Stomach (tissue), 19 donors: ENCODE measurements at regions of chr1 and their contacts with region 1.

Region 1: GRCh38 chr1:11339346-11340232 is 66.6 kb downstream of the UBIAD1 start:
- DNase-seq: peak in 1 of 2 donors; percentile 61
- H3K4me3 ChIP-seq: no peak overlapping the region
- H3K27ac ChIP-seq: no peak overlapping the region
- H3K4me1 ChIP-seq: peaks cover 0 to 18% (median 6%) of the 10 kb centered on the region in 4 donors
- H3K27me3 ChIP-seq: peaks cover 0 to 79% (median 10%) of the 10 kb centered on the region in 3 donors
- CTCF ChIP-seq: no peak
- EP300 ChIP-seq: no peak
- POLR2A ChIP-seq: no peak

Region 2: DNA sequence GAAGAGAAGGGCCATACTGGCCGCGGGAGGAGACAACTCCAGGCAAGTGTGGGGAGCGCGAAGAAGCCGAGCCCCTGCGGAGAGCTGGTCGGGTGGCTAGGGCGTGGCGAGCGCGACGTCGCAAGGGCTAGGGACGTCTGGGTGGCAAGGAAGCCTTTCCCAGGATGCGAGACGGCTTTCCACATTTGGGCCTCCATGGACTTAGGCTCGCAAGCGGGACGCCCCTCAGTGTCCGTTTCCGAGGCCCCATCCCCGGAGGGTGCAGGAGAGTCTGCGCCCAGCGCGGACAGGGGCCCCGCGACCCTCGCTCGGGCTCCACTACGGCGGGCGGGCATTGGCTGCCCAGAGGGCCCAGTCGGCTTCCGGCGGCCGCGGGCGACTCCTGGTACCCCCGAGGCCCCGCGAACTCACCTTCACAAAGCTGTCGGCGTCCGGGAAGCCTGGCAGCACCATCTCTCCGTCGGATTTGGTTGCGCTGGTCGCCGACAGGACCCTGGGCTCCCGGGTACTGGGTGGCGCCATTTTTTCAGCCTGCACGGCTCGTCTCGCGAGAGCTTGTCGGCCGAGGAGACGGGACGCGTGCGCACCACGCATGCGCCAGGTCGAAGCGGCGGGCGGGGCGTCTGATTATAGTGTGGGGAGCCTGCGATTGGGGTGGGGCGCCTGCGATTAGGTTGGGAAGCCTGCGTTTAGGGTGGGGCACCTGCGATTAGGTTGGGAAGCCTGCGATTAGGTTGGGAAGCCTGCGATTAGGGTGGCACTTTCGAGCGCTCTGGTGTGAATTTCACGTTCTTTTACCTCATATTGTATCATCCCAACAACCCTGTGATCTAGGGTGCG is 240.1 kb before region 1 on chr1 and contains the start of gene EXOSC10:
- intact Hi-C with region 1: no loop called
- DNase-seq: peak; percentile 96 to 98
- H3K4me3 ChIP-seq: peak within 1 kb of the TSS; percentile 88 to 99 (median 96)
- H3K27ac ChIP-seq: peak within 1 kb of the TSS; percentile 85 to 91 (median 88)
- H3K4me1 ChIP-seq: peaks cover 14 to 18% (median 18%) of the 10 kb centered on the region in 4 donors
- H3K27me3 ChIP-seq: no peaks in the 10 kb centered on the region
- CTCF ChIP-seq: no peak
- EP300 ChIP-seq: no peak
- POLR2A ChIP-seq: no peak
- total RNA-seq, gene EXOSC10: 15.1 to 118 (median 38.3) TPM

Region 3: GRCh38 chr1:11134251-11134897 is 205.2 kb before region 1 on chr1:
- intact Hi-C with region 1: no loop called
- DNase-seq: no peak
- H3K4me3 ChIP-seq: no peak overlapping the region
- H3K27ac ChIP-seq: no peak overlapping the region
- H3K4me1 ChIP-seq: no peaks in the 10 kb centered on the region
- H3K27me3 ChIP-seq: no peaks in the 10 kb centered on the region
- CTCF ChIP-seq: no peak
- EP300 ChIP-seq: no peak
- POLR2A ChIP-seq: no peak

Region 4: DNA sequence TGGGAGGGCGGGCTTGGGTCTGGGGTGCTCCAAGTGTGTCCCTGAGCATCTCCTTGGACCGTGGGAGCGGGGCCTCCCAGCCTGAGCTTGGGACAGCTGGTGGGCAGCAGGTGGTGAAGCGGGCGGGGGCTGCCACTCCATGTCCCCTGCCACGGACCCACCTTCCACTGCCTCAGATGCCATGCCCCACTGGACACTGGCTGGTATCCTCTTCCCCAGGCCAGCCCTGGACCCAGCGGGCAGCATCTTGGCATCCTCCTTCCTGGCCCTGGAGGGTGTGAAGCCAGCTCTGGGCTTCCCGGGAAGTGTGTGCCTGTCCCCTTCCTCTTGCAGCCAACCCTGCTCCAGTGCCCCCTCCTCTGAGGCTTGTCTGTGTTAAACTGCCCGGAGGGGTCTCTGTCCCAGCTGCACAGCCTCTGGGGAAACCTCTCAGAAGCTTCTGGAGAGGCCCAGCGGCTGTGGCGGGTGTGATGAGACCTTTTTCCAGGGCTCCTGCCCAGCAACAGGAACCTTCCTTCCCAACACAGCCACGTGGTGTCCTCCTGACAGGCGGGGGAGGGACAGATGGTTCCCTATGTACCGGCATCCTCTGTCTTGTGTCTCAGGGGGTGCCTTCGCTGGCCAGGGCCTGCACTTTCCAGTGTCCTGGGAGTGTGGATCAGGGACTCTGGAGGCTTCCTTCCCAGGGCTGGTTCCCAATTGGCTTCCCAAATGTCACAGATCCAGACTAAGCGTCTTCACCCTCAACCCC is 57.7 kb after region 1 on chr1:
- intact Hi-C with region 1: no loop called
- DNase-seq: no peak
- H3K4me3 ChIP-seq: no peak overlapping the region
- H3K27ac ChIP-seq: no peak overlapping the region
- H3K4me1 ChIP-seq: peaks cover 0 to 11% (median 3%) of the 10 kb centered on the region in 4 donors
- H3K27me3 ChIP-seq: peaks cover 0 to 61% (median 23%) of the 10 kb centered on the region in 3 donors
- CTCF ChIP-seq: no peak
- EP300 ChIP-seq: no peak
- POLR2A ChIP-seq: no peak

Region 5: GRCh38 chr1:11629184-11630016 is 289.8 kb after region 1 on chr1:
- intact Hi-C with region 1: loop called (anchors 10 kb)
- DNase-seq: no peak
- H3K4me3 ChIP-seq: no peak overlapping the region
- H3K27ac ChIP-seq: no peak overlapping the region
- H3K4me1 ChIP-seq: no peaks in the 10 kb centered on the region
- H3K27me3 ChIP-seq: peaks cover 0 to 85% (median 6%) of the 10 kb centered on the region in 3 donors
- CTCF ChIP-seq: no peak
- EP300 ChIP-seq: no peak
- POLR2A ChIP-seq: no peak